ENCODE measurements at regions of chrX and their contacts with region 1.

Region 1: DNA sequence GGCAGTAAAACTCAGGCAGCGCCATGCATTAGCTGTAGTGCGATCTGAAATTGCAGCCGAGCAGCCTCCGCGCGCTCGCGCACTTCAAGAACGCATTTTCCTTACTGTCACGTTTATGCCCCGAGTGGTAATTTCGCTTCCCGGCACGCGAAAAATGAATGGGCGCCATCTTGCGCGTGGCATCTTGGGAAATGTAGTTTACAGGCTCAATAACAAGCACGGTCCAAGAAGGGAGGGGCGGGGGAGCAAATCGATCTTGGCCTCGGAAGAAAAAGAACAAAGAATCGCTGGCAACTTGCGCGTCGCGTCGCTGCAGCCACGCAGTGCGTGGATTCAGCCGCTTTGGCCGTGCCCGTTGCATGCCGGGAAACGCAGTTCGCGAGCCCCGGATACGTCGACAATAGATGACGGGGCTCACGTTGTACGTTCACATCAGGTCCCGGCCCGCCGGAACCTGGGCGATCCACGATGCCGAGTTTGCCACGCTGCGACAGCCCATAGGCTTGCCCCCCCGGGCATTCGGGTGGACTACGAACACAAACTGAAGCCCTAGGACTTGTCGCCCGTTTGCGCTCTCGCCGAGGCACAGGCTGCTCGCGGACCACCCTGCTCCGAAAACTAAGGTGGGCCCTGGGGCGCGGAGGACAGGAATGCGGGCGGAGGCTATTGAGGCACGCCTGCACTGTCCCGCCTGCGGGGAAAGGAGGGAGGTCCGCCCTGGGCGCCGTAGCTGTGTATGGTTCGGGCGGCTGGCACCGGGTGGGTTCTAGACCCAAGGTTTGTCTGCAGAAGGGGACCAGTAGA is at the start of gene FTSJ1:
- DNase-seq: peak; percentile 87 to 96 (median 92)
- H3K4me3 ChIP-seq: peak within 1 kb of the TSS; percentile 57 to 79
- H3K4me3 Mint-ChIP-seq: peak within 1 kb of the TSS; percentile 79 to 92 (median 90)
- H3K27ac ChIP-seq: peak within 1 kb of the TSS; percentile 80
- H3K27ac Mint-ChIP-seq: peak within 1 kb of the TSS; percentile 78 to 95 (median 92)
- H3K4me1 ChIP-seq: peaks cover 24% of the 10 kb centered on the region
- H3K4me1 Mint-ChIP-seq: peaks cover 16 to 24% (median 22%) of the 10 kb centered on the region in 4 donors
- H3K27me3 ChIP-seq: no peaks in the 10 kb centered on the region
- H3K27me3 Mint-ChIP-seq: no peaks in the 10 kb centered on the region
- total RNA-seq, gene FTSJ1: 48.1 to 54.1 TPM

Region 2: GRCh38 chrX:48508400-48509244 is 32.6 kb after region 1 on chrX and contains the start of gene PORCN:
- CTCF ChIA-PET with region 1: no interaction called
- POLR2A ChIA-PET with region 1: interaction called, 3 read pairs
- intact Hi-C with region 1: loop called (anchors 1 kb)
- DNase-seq: peak; percentile 62 to 78 (median 65)
- H3K4me3 ChIP-seq: peak within 1 kb of the TSS; percentile 61 to 64
- H3K4me3 Mint-ChIP-seq: peak within 1 kb of the TSS; percentile 87 to 91 (median 88)
- H3K27ac ChIP-seq: peak within 1 kb of the TSS; percentile 78
- H3K27ac Mint-ChIP-seq: peak within 1 kb of the TSS; percentile 70 to 96 (median 91)
- H3K4me1 ChIP-seq: peaks cover 16% of the 10 kb centered on the region
- H3K4me1 Mint-ChIP-seq: peaks cover 10 to 23% (median 12%) of the 10 kb centered on the region in 4 donors
- H3K27me3 ChIP-seq: no peaks in the 10 kb centered on the region
- H3K27me3 Mint-ChIP-seq: no peaks in the 10 kb centered on the region
- total RNA-seq, gene PORCN: 15.3 to 15.4 TPM

Region 3: DNA sequence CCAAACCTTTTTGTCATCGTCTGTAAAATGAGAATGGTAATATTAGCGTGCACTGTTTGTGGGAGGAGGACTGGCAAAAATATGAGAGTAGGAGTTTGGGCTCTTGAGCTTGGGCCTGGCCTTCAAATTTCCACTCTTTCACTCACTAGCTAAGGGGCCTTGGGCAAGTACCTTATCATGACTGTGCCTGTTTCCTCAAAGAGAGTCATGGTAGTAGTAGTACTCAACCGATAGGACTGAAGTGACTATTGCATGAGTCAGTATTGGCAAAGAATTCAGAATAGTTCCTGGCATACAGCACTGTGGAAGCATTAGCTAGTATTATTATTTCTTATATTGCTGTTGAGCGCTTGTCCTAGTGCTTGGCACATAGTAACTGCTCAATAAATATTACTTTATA is 82.3 kb after region 1 on chrX:
- CTCF ChIA-PET with region 1: no interaction called
- POLR2A ChIA-PET with region 1: no interaction called
- intact Hi-C with region 1: no loop called
- DNase-seq: no peak
- H3K4me3 ChIP-seq: no peak overlapping the region
- H3K4me3 Mint-ChIP-seq: no peak overlapping the region
- H3K27ac ChIP-seq: no peak overlapping the region
- H3K27ac Mint-ChIP-seq: no peak overlapping the region
- H3K4me1 ChIP-seq: no peaks in the 10 kb centered on the region
- H3K4me1 Mint-ChIP-seq: peaks cover 0 to 2% (median 0%) of the 10 kb centered on the region in 4 donors
- H3K27me3 ChIP-seq: no peaks in the 10 kb centered on the region
- H3K27me3 Mint-ChIP-seq: no peaks in the 10 kb centered on the region

Region 4: GRCh38 chrX:48597353-48598264 is 121.6 kb after region 1 on chrX and contains the start of gene WDR13:
- CTCF ChIA-PET with region 1: no interaction called
- POLR2A ChIA-PET with region 1: interaction called, 3 read pairs
- intact Hi-C with region 1: loop called (anchors 1 kb)
- DNase-seq: peak; percentile 88 to 92 (median 91)
- H3K4me3 ChIP-seq: peak within 1 kb of the TSS; percentile 84 to 85
- H3K4me3 Mint-ChIP-seq: peak within 1 kb of the TSS; percentile 90 to 99 (median 97)
- H3K27ac ChIP-seq: peak within 1 kb of the TSS; percentile 95
- H3K27ac Mint-ChIP-seq: peak within 1 kb of the TSS; percentile 96 to 100 (median 99)
- H3K4me1 ChIP-seq: peaks cover 12% of the 10 kb centered on the region
- H3K4me1 Mint-ChIP-seq: peaks cover 7 to 17% (median 13%) of the 10 kb centered on the region in 4 donors
- H3K27me3 ChIP-seq: no peaks in the 10 kb centered on the region
- H3K27me3 Mint-ChIP-seq: no peaks in the 10 kb centered on the region
- total RNA-seq, gene WDR13: 47.4 to 49.7 TPM

Region 5: GRCh38 chrX:48948589-48948988 is 472.6 kb after region 1 on chrX:
- CTCF ChIA-PET with region 1: no interaction called
- POLR2A ChIA-PET with region 1: no interaction called
- intact Hi-C with region 1: no loop called
- DNase-seq: no peak
- H3K4me3 ChIP-seq: no peak overlapping the region
- H3K4me3 Mint-ChIP-seq: no peak overlapping the region
- H3K27ac ChIP-seq: no peak overlapping the region
- H3K27ac Mint-ChIP-seq: peak overlapping the region in 2 of 7 donors; percentile 47 to 68
- H3K4me1 ChIP-seq: peaks cover 68% of the 10 kb centered on the region
- H3K4me1 Mint-ChIP-seq: peaks cover 26 to 62% (median 41%) of the 10 kb centered on the region in 4 donors
- H3K27me3 ChIP-seq: no peaks in the 10 kb centered on the region
- H3K27me3 Mint-ChIP-seq: no peaks in the 10 kb centered on the region

Measured in CD4-positive, alpha-beta memory T cell (primary cell).